Posterior cingulate gyrus (tissue), 11 donors: ENCODE measurements at regions of chr9 and their contacts with region 1.

Region 1: DNA sequence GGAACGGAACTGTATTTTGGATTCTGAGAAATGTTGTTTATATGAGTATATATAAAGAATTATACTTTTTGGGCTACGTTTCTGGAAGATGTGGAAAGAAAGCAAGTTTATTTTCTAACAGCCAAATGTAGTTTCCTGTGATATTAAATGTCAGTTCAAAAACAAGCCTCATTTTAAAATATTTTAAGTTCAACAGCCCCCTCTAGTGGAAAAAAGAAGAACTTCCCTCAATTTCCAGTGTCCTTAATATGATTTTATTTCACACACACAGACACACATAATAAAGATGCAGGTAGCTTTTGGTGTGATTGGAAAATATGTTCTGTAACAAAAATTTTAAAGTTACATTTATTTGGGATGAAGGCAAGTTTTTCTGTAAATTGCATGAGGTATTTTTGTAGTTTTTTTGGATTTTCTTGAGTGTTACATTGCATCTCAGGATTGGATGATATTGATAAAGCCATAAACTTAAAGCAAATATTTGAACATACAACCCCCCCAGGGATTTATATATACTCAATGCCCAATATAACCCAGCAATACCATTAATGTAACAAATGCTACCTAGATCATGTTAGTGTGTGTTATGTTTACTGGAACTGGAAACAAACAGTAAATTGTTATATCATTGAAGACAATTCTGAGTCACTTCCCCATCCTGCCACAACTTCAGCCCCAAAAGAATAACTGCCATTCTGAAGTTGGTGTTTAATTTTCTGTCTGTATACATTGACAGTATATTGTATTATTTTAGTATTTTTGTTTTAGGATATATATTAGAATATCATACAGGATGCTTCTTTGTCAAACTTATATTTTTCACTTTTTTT is 54.0 kb downstream of the CCDC171 start:
- DNase-seq: no peak

Region 2: GRCh38 chr9:15211160-15211814 is 395.6 kb before region 1 on chr9:
- intact Hi-C with region 1: loop called (anchors 1 kb)
- DNase-seq: peak in 6 of 10 donors; percentile 16 to 83 (median 48)

Region 3: DNA sequence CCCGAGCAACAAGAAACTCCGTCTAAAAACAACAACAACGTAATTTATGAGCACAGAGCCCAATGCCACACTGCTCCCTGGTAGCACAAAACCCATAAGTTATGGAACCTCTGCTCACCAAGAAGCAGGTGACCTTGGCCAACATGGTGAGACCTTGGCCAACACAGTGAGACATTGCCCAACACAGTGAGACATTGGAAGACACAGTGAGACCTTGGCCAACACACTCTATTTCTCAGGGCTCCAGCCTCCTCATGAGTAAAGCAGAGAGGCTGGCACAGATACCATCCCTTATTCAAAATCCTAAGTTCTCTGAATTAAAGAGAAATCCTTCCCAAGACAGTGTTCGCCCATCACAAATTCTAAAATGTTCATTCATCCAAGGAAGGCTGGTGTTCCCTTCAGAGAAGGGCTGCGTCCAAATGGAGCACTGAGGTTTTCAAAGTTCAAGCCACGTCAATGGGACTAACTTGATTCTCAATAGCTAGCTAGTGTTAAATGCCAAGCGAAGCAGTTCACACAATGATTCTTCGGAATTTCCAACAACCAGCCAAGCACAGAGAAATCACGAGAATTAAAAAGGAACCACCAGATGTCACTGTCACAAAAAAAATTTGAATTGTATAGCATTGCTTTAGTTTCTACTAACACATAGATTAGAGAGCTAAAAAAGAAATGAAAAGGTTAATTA is 329.3 kb before region 1 on chr9:
- intact Hi-C with region 1: loop called (anchors 5 kb)
- DNase-seq: no peak

Region 4: GRCh38 chr9:15469862-15470261 is 137.0 kb before region 1 on chr9:
- intact Hi-C with region 1: loop called (anchors 10 kb)
- DNase-seq: no peak

Region 5: DNA sequence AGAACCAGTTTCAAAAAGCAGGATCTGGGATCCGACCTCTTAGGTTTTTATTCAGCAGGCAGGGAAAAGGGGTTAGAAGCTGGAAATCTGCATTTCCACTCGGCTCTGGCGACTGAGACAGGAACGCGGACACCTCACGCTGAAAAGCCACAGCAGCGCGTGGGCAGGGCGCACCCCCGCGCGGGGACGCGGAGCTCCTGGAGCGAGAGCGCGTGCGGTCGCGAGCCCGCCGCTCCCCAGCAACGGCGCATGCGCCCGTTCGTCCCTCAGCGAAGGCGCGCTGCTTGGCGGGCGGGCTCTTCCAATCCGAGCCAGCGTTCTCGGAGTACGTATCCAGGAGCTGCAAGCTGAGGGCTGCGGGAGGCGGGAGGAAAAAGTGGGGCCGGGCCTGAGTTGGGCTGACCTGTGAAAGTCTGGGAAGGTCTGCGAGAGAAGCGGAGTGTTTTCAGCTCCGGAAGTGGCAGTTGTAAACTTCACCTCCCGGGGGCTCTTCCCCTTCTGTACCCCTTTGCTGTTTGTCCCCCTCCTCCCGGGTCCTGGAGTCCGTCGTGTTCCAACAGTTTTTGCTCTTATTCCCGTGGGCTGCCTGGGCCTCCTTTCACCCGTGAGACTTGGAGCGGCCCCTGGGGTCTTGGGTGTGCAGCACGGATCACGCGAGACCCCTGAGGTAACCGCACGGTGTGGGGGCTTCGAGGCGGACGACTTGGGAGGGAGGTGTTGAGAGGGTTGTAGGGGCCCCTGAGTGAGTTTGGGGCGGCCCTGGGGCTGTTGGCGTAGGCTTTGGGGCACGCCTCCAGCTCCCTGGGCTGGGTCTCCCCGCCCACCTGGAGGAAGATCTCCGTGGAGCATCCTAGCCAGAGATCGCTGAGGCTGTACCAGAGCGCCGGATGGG is 54.0 kb before region 1 on chr9 and contains the start of gene CCDC171:
- intact Hi-C with region 1: loop called (anchors 5 kb)
- DNase-seq: peak; percentile 81 to 99 (median 90)